Activated naive CD4-positive, alpha-beta T cell treated with anti-CD3 and anti-CD28 coated beads for 36 hours (primary cell): ENCODE measurements at regions of chr6 and their contacts with region 1.

Region 1: GRCh38 chr6:149963462-149964307 is at the start of gene ULBP1:
- DNase-seq: peak; percentile 93
- H3K4me3 Mint-ChIP-seq: peak within 1 kb of the TSS; percentile 90
- H3K27ac Mint-ChIP-seq: peak within 1 kb of the TSS; percentile 78
- H3K4me1 Mint-ChIP-seq: peaks cover 19% of the 10 kb centered on the region
- H3K27me3 Mint-ChIP-seq: peaks cover 63% of the 10 kb centered on the region
- total RNA-seq, gene ULBP1: 2.6 to 2.8 TPM

Region 2: DNA sequence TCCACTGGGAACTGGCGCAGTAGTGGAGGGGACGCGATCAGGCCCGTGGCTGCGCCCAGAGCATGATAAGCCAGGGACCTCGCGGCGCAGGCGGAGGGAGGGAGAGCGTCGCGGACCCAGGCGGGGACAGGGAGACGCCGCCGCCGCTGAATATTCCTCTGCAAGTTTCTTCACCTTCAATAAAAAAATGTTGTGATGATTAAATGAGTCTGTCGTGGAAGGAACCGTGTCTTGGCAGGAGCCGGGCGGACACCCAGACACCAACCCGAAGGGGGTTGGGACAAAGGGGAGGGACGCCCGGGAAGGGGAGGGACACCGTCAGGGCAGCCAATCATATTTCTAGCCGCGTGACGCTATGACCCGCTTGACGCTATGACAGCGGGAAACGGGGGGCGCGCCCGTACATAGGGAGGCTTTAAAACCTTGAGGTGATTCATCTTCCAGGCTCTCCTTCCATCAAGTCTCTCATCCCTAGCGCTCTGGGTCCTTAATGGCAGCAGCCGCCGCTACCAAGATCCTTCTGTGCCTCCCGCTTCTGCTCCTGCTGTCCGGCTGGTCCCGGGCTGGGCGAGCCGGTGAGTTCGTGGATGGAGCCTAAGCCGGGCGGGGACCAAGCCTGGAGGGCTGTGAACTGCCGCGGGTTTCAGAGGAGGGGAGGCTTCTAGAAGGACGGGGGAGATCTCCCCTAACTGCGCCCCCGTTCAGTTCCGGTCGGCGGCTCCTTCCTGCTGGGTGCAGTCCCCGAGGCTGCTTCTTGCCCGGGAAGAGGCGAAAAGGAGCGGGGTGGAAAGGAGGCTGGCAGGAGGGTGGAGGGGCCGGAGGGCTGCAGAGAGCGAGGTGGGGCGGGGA is 21.9 kb before region 1 on chr6 and contains the start of gene ULBP2:
- CTCF ChIA-PET with region 1: interaction called, 4 read pairs
- intact Hi-C with region 1: loop called (anchors 1 kb)
- DNase-seq: peak; percentile 96
- H3K4me3 Mint-ChIP-seq: peak within 1 kb of the TSS; percentile 89
- H3K27ac Mint-ChIP-seq: no peak within 1 kb of the TSS
- H3K4me1 Mint-ChIP-seq: peaks cover 32% of the 10 kb centered on the region
- H3K27me3 Mint-ChIP-seq: peaks cover 46% of the 10 kb centered on the region
- total RNA-seq, gene ULBP2: 0.69 to 1.4 TPM

Region 3: DNA sequence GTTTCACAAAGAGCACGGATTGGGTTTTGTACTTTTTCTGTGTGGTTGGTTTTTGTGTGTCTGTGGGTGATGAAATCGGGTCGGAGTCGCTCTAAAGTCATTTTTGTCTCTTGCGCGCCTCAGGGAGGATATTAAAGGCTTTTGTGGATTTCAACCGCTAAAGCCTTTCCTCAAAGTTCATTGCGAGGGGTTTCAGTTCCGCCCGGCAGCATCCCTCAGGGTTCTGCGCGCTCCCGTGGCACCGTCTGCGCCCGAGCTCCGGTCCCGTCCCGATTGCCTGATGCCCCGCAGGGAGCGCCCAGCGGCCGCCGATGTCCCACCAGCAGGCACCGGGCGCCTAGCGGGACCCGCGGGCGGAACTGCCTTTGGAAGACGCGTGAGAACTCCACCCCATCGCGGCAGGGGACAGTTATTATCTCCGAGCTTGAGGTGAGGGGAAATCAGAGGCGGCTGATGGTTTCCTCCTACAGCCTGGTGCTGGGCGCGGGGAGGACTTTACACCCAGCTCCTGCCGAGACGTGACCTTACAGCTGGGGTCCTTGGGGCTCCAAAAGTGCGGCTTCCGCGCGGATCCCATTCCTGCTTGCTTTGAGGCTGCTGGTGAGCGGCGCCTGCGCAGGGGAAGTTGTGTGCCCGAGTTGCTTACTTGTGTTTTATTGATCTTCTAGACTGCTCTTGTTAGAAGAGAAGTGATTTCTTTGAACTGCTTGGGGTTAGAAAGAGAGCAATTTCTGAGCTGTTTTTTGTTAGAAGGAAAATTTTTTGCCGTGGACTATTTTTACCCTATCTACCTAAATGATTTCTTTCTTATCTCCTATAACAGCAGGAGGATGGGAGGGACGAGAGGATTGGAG is 27.2 kb after region 1 on chr6:
- CTCF ChIA-PET with region 1: no interaction called
- intact Hi-C with region 1: loop called (anchors 1 kb)
- DNase-seq: peak; percentile 33
- H3K4me3 Mint-ChIP-seq: peak overlapping the region; percentile 53
- H3K27ac Mint-ChIP-seq: no peak overlapping the region
- H3K4me1 Mint-ChIP-seq: peaks cover 24% of the 10 kb centered on the region
- H3K27me3 Mint-ChIP-seq: peaks cover 83% of the 10 kb centered on the region

Region 4: DNA sequence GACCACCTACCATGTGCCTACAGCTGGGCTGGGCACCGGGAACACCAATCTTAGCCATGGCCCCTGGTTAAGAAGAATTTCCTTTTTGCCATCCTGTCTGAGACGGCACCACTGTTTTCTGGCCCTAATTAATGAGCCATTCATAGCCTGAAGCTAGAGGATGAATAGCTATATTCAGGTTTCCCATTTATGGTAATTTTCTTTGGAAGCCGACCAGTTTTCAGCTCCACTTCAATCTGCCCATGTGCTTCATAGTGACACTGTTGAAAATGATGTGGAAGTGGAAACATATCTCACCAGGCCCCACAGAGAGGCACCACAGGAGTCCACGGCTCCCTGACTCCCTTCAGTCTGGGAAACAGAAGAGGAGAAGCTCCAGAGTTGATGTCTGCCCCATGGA is 127.8 kb after region 1 on chr6:
- CTCF ChIA-PET with region 1: no interaction called
- intact Hi-C with region 1: no loop called
- DNase-seq: no peak
- H3K4me3 Mint-ChIP-seq: no peak overlapping the region
- H3K27ac Mint-ChIP-seq: no peak overlapping the region
- H3K4me1 Mint-ChIP-seq: no peaks in the 10 kb centered on the region
- H3K27me3 Mint-ChIP-seq: no peaks in the 10 kb centered on the region